BJ (cell line): ENCODE measurements at regions of chr5 and their contacts with region 1.

Region 1: DNA sequence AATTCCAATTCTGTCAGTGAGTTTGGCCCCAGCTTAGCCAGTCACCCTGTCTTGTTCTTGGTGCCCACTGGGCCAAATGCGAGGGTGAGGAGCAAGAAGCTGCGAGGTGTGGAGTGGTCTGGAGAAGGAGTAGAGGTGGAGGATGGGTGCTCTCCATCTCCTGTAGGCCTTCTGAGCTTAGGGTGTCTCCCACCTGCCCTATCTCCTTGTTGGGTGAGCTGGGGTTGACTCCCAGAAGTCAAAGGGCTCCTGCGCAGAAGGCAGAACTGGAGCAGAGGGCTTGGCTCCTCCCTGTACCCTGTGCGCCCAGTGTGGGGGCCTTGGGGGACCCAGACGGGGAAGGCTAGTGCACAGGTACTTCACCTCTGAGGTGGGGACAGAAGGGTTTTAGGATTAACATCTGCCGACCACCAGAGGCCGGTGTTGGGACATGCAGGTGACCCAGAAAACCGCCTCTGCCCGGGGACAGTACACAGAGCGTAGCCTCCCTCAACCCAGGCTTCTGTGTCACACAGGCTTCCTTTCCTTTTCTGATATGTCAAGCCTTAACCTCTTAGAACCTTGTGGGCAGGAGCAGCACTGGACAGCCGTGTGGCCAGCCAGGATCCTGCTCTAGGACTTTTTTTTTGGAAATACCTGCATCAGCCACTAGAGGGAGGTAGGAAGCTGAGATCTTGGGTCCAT is 16.9 kb downstream of the IL5 start:
- DNase-seq: no peak
- H3K4me3 ChIP-seq: no peak overlapping the region
- H3K27me3 ChIP-seq: peaks cover under 1% of the 10 kb centered on the region
- CTCF ChIP-seq: peak; percentile 85

Region 2: GRCh38 chr5:132540764-132541163 is 14.3 kb after region 1 on chr5:
- CTCF ChIA-PET with region 1: interaction called, 29 read pairs
- POLR2A ChIA-PET with region 1: no interaction called
- DNase-seq: no peak
- H3K4me3 ChIP-seq: no peak overlapping the region
- H3K27me3 ChIP-seq: peaks cover 15% of the 10 kb centered on the region
- CTCF ChIP-seq: no peak

Region 3: GRCh38 chr5:134125039-134126015 is 1598.9 kb after region 1 on chr5:
- CTCF ChIA-PET with region 1: no interaction called
- POLR2A ChIA-PET with region 1: interaction called, 11 read pairs
- DNase-seq: peak; percentile 87
- H3K4me3 ChIP-seq: no peak overlapping the region
- H3K27me3 ChIP-seq: no peaks in the 10 kb centered on the region
- CTCF ChIP-seq: no peak